Ascending aorta (tissue), 2 donors: ENCODE measurements at regions of chr2 and their contacts with region 1.

Region 1: GRCh38 chr2:42663106-42663780 is 94.8 kb downstream of the MTA3 start:
- DNase-seq: peak; percentile 16 to 72
- H3K4me3 ChIP-seq: no peak overlapping the region
- H3K27ac ChIP-seq: no peak overlapping the region
- H3K4me1 ChIP-seq: no peaks in the 10 kb centered on the region
- H3K27me3 ChIP-seq: no peaks in the 10 kb centered on the region
- CTCF ChIP-seq: peak; percentile 86 to 97 (median 93)

Region 2: DNA sequence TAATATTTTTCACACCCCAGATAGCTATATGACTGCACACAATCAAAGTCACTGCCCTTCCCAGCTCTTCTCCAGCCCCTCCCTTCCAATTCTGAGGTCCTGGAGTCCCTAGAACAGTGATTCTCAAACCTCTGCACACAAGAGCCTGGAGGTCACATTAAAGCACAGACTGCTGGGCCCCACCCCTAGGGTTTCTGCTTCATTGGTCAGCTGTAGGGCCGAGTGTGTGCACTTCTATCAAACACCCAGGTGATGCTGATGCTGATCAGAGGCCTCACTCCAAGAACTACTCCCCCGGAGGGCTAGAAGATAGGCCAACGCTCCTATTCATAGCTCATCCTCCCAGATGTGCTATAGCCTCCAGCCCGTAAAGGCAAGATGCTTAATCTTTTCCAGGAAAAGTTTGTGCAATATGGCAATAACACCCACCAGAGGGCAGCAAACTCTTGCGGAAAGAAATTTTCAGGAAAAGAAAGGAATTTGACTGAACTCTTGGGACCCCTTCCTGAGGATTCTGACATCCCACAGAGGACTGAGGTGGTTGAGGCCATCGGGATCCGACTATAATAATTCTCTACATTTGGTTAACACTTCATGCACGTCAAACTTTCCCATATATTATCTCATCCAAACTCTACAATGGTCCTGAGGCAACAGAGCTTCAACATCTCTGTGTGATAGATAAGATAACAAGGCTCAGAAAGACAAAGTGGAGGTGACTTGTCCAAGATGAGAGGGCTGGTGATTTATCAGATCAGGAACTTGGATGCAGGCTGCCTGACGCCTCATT is 809.6 kb before region 1 on chr2:
- intact Hi-C with region 1: no loop called
- DNase-seq: no peak
- H3K4me3 ChIP-seq: no peak overlapping the region
- H3K27ac ChIP-seq: no peak overlapping the region
- H3K4me1 ChIP-seq: no peaks in the 10 kb centered on the region
- H3K27me3 ChIP-seq: no peaks in the 10 kb centered on the region
- CTCF ChIP-seq: peak; percentile 54 to 77 (median 66)

Region 3: GRCh38 chr2:42494355-42495233 is 168.6 kb before region 1 on chr2:
- intact Hi-C with region 1: loop called (anchors 1 kb)
- DNase-seq: peak in 1 of 2 donors; percentile 71
- H3K4me3 ChIP-seq: peak overlapping the region; percentile 64 to 70
- H3K27ac ChIP-seq: no peak overlapping the region
- H3K4me1 ChIP-seq: peaks cover 0 to 9% of the 10 kb centered on the region in 2 donors
- H3K27me3 ChIP-seq: peaks cover 12% of the 10 kb centered on the region
- CTCF ChIP-seq: peak; percentile 64 to 86 (median 85)

Region 4: DNA sequence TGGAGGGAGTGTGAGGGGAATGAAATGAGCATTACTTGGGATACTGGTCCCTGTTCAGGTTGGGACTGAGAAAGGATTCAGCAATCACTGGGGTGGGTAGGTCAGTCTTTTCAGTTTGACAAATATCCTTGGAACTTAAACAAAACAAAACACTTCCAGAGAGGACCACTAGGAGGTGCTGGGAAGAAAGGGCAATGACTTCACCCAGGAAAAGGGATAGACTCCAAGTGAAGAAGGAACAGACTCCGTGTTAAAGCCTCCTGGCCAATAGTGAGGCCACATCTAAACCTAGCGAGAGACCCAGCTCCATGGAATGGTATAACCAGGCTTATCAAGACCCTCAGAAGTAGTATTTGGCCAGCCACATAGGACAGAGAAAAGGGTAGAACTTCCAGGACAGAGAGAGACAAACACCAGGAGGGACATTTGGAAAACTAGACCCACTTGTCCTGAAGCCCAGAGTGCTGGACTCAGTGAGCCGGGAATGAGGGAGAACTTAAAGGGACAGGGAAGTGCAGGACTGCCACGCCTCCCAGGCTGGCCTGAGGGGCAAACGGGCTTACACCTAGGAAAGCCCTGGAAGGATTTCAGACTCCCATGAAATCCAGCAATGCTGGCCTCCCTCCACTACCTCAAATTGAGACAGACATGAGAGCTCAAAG is 149.9 kb before region 1 on chr2:
- intact Hi-C with region 1: loop called (anchors 2 kb)
- DNase-seq: no peak
- H3K4me3 ChIP-seq: no peak overlapping the region
- H3K27ac ChIP-seq: no peak overlapping the region
- H3K4me1 ChIP-seq: no peaks in the 10 kb centered on the region
- H3K27me3 ChIP-seq: no peaks in the 10 kb centered on the region
- CTCF ChIP-seq: peak; percentile 53 to 59 (median 58)